Left lung (tissue), 14 donors: ENCODE measurements at regions of chr14 and their contacts with region 1.

Region 1: DNA sequence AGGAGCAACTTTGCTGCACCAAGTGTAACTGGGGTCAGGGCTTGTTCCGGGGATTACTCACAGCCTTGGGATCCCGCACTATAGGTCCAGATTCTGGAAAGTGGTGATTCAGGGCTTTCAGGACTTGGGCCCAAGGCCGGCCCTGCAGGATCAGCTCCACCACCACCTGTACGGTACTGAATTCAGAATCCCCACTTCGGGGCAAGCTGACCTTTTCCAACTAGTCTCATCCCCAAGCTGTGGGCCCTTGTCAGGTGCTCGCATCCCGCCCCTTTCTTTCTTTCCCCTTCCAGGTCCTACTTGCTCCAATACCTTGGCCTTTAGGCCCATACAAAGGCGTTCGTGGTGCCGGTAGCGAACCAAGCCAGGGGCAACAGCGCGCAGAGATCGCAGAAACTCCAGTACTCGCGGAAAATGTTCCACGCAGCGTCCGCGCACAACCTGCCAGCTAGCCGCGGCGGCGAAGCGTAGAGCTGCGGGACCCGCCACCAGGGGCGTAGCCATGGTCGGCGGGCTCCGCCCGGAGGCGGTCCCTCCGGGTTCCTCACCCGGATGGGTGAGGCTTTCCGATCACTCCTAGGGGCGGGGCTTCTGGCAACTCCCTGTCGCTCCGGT is 487 bp downstream of the TINF2 start:
- DNase-seq: peak in 3 of 4 donors; percentile 95 to 98 (median 95)
- ATAC-seq: peak; percentile 95
- H3K4me3 ChIP-seq: peak overlapping the region; percentile 80 to 85
- H3K27ac ChIP-seq: peak overlapping the region; percentile 99 to 100
- H3K4me1 ChIP-seq: peaks cover 30 to 55% of the 10 kb centered on the region in 2 donors
- H3K27me3 ChIP-seq: no peaks in the 10 kb centered on the region
- CTCF ChIP-seq: peak; percentile 62 to 78

Region 2: GRCh38 chr14:24299255-24300195 is 57.6 kb after region 1 on chr14 and contains the starts of genes DHRS1 and NOP9:
- intact Hi-C with region 1: loop called in 1 of 2 experiments (anchors 5 kb)
- DNase-seq: peak; percentile 89 to 96 (median 94)
- ATAC-seq: peak; percentile 92
- H3K4me3 ChIP-seq: peak within 1 kb of the TSS; percentile 82 to 91
- H3K27ac ChIP-seq: peak within 1 kb of the TSS; percentile 73 to 82
- H3K4me1 ChIP-seq: peaks cover 14 to 47% of the 10 kb centered on the region in 2 donors
- H3K27me3 ChIP-seq: no peaks in the 10 kb centered on the region
- CTCF ChIP-seq: peak in 1 of 2 donors; percentile 12
- polyA plus RNA-seq, gene DHRS1: 37.7 to 55.5 (median 42.6) TPM
- polyA plus RNA-seq, gene NOP9: 22.4 to 28.4 (median 26.0) TPM

Region 3: DNA sequence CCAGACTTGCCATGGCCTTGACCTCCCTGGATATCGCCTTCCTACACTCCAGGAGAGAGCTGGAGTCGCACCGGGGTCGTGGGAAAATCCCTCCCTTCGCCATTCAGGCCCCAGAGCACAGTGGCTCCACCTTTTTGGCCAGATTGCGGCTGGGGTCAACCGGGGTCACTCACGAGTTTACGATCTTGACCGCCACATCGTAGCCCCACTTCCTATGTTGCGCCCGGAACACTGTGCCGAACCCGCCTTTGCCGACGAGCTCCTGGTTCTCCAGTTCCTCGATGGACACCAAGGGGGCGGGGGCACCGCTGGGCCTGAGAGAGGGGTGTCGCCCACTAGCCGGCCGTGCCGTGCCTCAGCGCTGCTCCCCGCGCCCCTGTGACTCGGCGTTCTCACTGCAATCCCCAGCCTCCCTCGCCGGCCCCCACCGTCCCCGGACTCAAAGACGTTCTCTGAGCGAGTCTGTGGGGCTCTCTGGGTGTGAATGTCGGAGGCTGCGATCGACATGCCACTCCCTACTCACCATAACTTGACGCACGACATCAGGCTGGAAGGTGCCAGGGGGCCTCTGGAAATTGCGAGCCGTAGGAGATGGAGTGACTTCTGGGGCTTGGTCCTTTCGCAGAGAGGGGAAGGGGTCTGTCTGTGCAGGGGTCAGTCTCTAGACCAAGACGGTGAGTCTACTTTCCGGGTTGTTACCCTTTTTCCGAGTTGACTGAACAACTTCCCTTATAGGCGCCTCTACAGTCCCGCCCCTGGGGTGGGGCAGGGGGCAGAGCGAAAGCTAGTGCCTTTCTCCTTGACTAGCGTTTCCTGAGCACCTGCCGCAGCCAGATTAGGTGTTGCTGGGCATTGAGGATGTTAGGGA is 97.6 kb after region 1 on chr14 and contains the start of gene RIPK3:
- intact Hi-C with region 1: no loop called
- DNase-seq: peak in 2 of 4 donors; percentile 79 to 94
- ATAC-seq: peak; percentile 94
- H3K4me3 ChIP-seq: peak within 1 kb of the TSS; percentile 59 to 65
- H3K27ac ChIP-seq: peak within 1 kb of the TSS; percentile 29 to 85
- H3K4me1 ChIP-seq: peaks cover 9 to 51% of the 10 kb centered on the region in 2 donors
- H3K27me3 ChIP-seq: peaks cover 7 to 13% of the 10 kb centered on the region in 2 donors
- CTCF ChIP-seq: no peak
- polyA plus RNA-seq, gene RIPK3: 2.4 to 3.8 (median 3.0) TPM

Region 4: DNA sequence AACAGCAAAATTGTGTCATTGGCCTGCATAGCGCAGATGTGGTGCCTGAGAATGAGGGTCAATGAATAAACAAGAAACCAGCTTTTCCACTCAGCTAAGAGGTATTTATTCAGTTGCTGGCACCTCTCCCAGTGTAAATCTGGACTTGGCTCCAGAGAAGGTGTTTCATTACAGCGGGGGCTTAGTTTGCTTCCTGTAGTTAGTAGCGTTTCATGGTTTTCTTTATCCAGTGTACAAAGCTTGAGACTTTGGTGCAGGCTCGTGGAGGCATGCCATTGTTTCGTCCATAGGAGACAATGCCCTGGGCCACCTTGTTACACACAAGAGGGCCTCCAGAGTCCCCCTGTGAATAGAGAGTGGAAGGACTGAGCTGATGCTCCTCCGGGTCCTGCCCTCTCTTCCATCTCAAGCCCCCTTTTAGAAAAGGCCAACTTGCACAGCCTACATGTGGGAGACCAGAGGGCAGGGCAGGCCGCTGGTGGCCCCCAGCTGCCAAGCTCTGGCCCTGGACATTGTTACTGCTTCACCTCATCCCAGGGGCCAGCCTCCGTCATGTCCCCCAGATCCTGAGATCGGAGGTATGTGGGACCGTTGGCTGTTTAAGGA is 389.0 kb after region 1 on chr14:
- intact Hi-C with region 1: no loop called
- DNase-seq: peak in 2 of 4 donors; percentile 57 to 87
- ATAC-seq: peak; percentile 85
- H3K4me3 ChIP-seq: no peak overlapping the region
- H3K27ac ChIP-seq: no peak overlapping the region
- H3K4me1 ChIP-seq: no peaks in the 10 kb centered on the region
- H3K27me3 ChIP-seq: no peaks in the 10 kb centered on the region
- CTCF ChIP-seq: no peak